Dendritic cell treated with granulocyte-macrophage colony-stimulating factor and Interleukin-4, amounts not matched to agents 40 ng/mL and 50 ng/mL, for 4 days (primary cell): ENCODE measurements at regions of chr12 and their contacts with region 1.

Region 1: GRCh38 chr12:58443273-58443980 is 476.9 kb downstream of the LRIG3 start:
- H3K4me3 Mint-ChIP-seq: no peak overlapping the region
- H3K27ac Mint-ChIP-seq: no peak overlapping the region
- H3K4me1 Mint-ChIP-seq: no peaks in the 10 kb centered on the region
- H3K27me3 Mint-ChIP-seq: no peaks in the 10 kb centered on the region

Region 2: DNA sequence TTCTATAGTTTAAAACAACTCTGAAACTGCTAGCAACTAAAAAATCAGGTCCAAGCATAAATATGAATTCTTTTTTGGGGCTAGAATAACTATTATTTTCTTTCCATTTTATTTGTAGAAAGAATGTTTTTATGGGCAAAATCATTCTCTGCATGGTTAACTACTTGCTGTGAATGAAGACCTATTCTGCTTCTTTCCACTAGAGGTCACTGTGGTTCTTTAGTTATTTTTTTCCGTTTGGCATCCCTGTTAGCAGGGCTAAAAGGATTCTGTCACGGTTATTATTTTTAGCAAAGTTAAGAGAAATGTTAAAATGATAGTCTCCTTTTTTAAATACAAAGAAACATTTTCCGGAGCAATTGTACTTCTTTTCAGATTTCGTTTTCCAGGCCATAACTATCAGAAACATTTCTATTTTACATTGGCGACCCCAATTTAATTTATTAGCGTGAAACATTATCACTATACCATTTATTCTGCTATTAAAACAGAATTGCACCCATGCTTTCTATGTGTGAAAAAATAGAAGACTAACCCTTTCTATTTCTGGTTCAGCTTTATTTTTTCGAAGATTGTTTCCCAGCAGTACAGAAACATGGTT is 97.3 kb before region 1 on chr12:
- intact Hi-C with region 1: loop called (anchors 2 kb)
- H3K4me3 Mint-ChIP-seq: no peak overlapping the region
- H3K27ac Mint-ChIP-seq: no peak overlapping the region
- H3K4me1 Mint-ChIP-seq: no peaks in the 10 kb centered on the region
- H3K27me3 Mint-ChIP-seq: no peaks in the 10 kb centered on the region